ENCODE measurements at regions of chr7 and their contacts with region 1.

Region 1: DNA sequence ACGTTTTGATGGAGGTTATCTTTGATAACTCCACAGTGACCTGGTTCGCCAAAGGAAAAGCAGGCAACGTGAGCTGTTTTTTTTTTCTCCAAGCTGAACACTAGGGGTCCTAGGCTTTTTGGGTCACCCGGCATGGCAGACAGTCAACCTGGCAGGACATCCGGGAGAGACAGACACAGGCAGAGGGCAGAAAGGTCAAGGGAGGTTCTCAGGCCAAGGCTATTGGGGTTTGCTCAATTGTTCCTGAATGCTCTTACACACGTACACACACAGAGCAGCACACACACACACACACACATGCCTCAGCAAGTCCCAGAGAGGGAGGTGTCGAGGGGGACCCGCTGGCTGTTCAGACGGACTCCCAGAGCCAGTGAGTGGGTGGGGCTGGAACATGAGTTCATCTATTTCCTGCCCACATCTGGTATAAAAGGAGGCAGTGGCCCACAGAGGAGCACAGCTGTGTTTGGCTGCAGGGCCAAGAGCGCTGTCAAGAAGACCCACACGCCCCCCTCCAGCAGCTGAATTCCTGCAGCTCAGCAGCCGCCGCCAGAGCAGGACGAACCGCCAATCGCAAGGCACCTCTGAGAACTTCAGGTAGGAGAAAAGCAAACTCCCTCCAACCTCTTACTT is at the start of gene SERPINE1:
- DNase-seq: peak; percentile 99
- H3K4me3 ChIP-seq: peak within 1 kb of the TSS; percentile 86
- CTCF ChIP-seq: no peak

Region 2: DNA sequence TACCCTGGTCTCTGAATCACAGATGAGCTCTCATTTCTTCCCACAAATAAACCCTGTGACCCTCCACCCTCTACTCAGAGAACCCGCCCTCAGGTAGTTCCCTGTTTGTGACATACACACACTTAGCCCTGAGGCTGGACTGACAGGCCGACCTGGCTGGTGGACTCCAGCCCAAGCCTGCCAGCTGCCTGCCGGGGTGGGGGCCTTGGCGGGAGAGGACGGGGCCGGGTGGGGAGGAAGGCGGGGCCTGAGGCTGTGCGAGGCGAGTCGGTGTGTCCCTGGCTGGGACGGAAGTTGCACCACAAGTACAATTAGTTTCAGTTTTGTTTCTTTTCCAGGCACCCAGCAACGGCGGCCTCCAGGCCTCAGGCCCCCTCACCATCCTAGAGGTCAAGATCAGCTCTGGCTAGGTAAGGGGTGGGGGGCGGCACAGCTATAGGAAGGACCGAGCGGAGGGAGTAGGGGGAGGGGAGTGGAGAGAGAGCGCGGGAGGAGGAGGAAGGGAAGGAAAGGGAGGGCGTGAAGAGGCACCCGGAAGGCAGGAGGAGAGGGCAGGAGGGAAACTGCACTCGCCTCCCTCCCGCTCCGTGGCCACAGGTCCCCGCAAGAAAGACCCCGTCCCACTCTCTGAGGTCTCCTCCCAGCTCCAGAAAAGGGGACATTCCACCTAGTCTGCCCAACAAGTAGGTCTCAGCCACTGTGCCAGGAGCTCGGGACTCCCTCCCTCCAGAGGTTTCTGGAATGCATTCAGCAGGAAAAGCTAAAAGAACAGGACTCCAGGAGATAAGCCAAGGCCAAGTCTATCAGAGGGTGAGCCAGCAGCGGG is 41.4 kb before region 1 on chr7 and contains the start of gene TRIM56:
- CTCF ChIA-PET with region 1: interaction called, 3 read pairs
- POLR2A ChIA-PET with region 1: interaction called, 16 read pairs
- DNase-seq: no peak
- H3K4me3 ChIP-seq: peak within 1 kb of the TSS; percentile 80
- CTCF ChIP-seq: no peak

Region 3: GRCh38 chr7:101094416-101095375 is 32.1 kb before region 1 on chr7:
- CTCF ChIA-PET with region 1: interaction called, 14 read pairs
- POLR2A ChIA-PET with region 1: interaction called, 106 read pairs
- DNase-seq: no peak
- H3K4me3 ChIP-seq: no peak overlapping the region
- CTCF ChIP-seq: peak; percentile 71

Region 4: DNA sequence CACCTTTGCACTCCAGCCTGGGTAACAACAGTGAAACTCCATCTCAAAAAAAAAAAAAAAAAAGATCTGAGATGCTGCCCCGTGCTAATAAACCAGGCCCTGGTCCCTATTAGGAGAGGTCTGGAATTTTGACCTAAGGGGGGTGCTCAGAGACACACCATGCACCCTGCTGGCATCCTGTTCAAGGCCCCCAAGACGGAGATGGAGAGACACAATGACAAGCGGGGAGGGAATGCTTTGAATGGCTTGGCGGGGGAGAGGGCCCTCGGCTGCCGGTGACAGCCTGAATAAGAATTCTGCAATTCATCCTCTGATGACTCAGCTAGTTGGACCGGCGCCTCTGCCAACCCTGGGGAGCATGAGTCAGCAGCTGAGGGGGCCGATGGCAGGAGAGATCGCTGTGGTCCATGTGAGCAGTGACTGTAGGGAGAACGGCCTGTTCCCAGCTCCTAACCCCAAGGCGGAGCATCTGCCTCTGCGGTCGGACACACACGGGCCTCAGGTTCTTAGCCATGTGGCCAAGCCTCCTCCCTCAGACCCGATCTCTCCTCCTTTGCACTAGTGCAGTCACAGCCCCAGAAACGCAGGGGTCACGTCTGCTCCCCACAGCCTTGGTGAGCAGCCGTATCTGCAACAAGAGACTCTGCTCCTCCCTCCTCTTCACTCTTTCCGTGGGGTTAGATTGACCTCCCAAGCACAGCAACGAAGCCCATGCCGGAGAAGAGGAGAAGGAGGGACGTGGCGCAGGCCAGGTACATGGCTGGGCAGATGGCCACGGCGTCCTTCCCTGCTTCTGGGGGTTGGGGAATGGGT is 26.6 kb before region 1 on chr7:
- CTCF ChIA-PET with region 1: interaction called, 14 read pairs
- POLR2A ChIA-PET with region 1: interaction called, 106 read pairs
- DNase-seq: peak; percentile 93
- H3K4me3 ChIP-seq: peak overlapping the region; percentile 23
- CTCF ChIP-seq: no peak

Region 5: GRCh38 chr7:101112233-101112632 is 14.5 kb before region 1 on chr7:
- CTCF ChIA-PET with region 1: interaction called, 5 read pairs
- POLR2A ChIA-PET with region 1: interaction called, 143 read pairs
- DNase-seq: no peak
- H3K4me3 ChIP-seq: no peak overlapping the region
- CTCF ChIP-seq: no peak

Measured in AG04449 (cell line).